GM12878 (cell line): ENCODE measurements at regions of chr15 and their contacts with region 1.

Region 1: GRCh38 chr15:48358229-48358641 is 27.0 kb downstream of the DUT start:
- DNase-seq: no peak
- ATAC-seq: peak; percentile 70
- H3K4me3 ChIP-seq: peak overlapping the region; percentile 22
- H3K27ac ChIP-seq: peak overlapping the region; percentile 53
- H3K4me1 ChIP-seq: peaks cover 10% of the 10 kb centered on the region
- H3K27me3 ChIP-seq: no peaks in the 10 kb centered on the region
- CTCF ChIP-seq: peak; percentile 44 to 73 (median 64); a peak in 5 of 6 replicates
- EP300 ChIP-seq: no peak
- POLR2A ChIP-seq: no peak
- RAD21 ChIP-seq: peak; percentile 78

Region 2: GRCh38 chr15:48406913-48407312 is 48.7 kb after region 1 on chr15:
- CTCF ChIA-PET with region 1: interaction called, 4 read pairs
- POLR2A ChIA-PET with region 1: no interaction called
- RAD21 ChIA-PET with region 1: interaction called, 19 read pairs
- SMC1A ChIA-PET with region 1: interaction called, 14 read pairs
- in situ Hi-C with region 1: no loop called
- intact Hi-C with region 1: no loop called
- DNase-seq: no peak
- ATAC-seq: no peak
- H3K4me3 ChIP-seq: no peak overlapping the region
- H3K27ac ChIP-seq: no peak overlapping the region
- H3K4me1 ChIP-seq: peaks cover 6% of the 10 kb centered on the region
- H3K27me3 ChIP-seq: no peaks in the 10 kb centered on the region
- CTCF ChIP-seq: peak in 2 of 3 experiments; percentile 2 to 38; a peak in 2 of 6 replicates
- EP300 ChIP-seq: no peak
- POLR2A ChIP-seq: no peak
- RAD21 ChIP-seq: no peak

Region 3: DNA sequence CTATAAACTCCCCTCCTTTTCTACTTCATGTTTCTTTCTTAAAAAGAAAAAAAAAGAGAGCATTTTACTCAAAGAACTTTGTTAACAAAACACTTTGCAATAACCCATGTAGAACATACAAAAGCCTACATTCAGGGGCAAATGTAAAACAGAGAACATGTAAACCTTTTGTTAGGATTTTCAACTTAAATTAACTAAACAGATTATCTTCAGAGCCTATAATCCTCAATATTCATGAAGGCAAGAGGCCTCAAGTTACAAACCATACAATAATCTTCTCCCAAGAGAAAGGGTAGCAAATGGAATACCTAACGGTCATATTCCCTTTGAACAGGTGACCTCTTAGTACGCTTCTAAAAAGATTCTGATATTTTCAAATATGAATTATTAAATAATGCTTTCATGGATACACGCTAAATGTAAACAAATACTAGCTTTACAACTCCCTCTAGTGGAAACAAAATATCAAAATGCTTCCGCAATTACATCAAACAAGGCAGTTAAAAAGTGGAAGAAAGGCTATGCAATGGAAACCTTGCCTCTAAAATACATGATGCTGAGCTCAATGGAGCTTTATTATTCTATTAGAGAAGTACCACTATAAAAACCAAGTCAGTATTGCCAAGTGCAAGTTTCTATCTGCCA is 442.7 kb after region 1 on chr15:
- CTCF ChIA-PET with region 1: interaction called, 69 read pairs
- POLR2A ChIA-PET with region 1: interaction called, 3 read pairs
- RAD21 ChIA-PET with region 1: interaction called, 50 read pairs
- SMC1A ChIA-PET with region 1: interaction called, 32 read pairs
- in situ Hi-C with region 1: no loop called
- intact Hi-C with region 1: loop called (anchors 5 kb)
- DNase-seq: no peak
- ATAC-seq: no peak
- H3K4me3 ChIP-seq: no peak overlapping the region
- H3K27ac ChIP-seq: no peak overlapping the region
- H3K4me1 ChIP-seq: peaks cover 12% of the 10 kb centered on the region
- H3K27me3 ChIP-seq: no peaks in the 10 kb centered on the region
- CTCF ChIP-seq: peak; percentile 21 to 43 (median 32); a peak in 4 of 6 replicates
- EP300 ChIP-seq: no peak
- POLR2A ChIP-seq: no peak
- RAD21 ChIP-seq: peak; percentile 66

Region 4: GRCh38 chr15:48861813-48862431 is 503.7 kb after region 1 on chr15:
- CTCF ChIA-PET with region 1: interaction called, 44 read pairs
- POLR2A ChIA-PET with region 1: no interaction called
- RAD21 ChIA-PET with region 1: interaction called, 11 read pairs
- SMC1A ChIA-PET with region 1: interaction called, 12 read pairs
- in situ Hi-C with region 1: no loop called
- intact Hi-C with region 1: loop called (anchors 1 kb)
- DNase-seq: no peak
- ATAC-seq: peak; percentile 87
- H3K4me3 ChIP-seq: no peak overlapping the region
- H3K27ac ChIP-seq: no peak overlapping the region
- H3K4me1 ChIP-seq: no peaks in the 10 kb centered on the region
- H3K27me3 ChIP-seq: no peaks in the 10 kb centered on the region; a peak in 1 of 4 replicates
- CTCF ChIP-seq: peak; percentile 67 to 92 (median 68); a peak in 5 of 6 replicates
- EP300 ChIP-seq: no peak
- POLR2A ChIP-seq: no peak
- RAD21 ChIP-seq: peak; percentile 99

Region 5: DNA sequence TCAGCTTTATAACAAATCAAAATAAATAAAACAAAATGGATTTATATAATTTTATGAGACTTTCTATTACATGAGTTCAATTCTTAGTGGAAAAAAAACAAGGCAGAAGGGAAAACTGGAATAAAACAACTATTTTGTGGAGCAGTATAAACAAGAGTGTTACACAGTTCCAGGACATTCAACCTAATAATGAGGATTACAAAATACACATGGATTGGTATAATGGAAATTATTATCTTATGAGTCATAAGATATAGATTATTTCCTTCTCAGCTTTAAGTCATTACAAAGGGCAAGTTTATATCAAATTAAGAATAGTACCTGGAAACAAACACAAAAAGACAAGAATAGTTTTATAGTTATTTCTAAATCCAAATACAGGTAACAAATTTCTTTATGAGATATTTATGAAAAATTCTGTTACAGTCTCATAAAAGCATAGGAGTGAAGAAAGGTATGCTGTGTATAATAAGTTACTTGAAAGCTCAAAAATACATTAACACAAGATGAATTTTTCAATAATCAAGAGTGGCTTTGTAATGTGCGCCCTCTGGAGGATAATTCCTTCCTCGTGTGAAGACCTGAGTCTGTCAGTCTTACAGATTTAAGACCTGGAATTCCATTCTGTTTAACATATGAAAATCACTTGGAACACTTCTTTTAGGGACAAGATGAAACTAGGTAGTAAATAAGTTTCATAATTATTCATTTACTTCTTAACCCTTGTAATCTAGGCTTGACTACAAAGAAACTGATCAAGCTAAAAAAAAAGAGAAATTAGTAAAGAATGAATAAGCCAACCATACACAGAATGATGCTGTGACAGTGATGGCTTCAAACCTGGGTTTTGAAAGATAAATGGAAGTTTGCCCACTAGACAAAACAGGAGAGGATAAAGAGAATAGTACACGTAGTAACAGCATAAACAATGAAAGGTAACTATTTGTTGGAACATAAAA is 787.7 kb after region 1 on chr15:
- CTCF ChIA-PET with region 1: interaction called, 11 read pairs
- POLR2A ChIA-PET with region 1: no interaction called
- RAD21 ChIA-PET with region 1: interaction called, 4 read pairs
- SMC1A ChIA-PET with region 1: interaction called, 12 read pairs
- in situ Hi-C with region 1: loop called (anchors 25 kb)
- intact Hi-C with region 1: loop called (anchors 10 kb)
- DNase-seq: no peak
- ATAC-seq: peak; percentile 75
- H3K4me3 ChIP-seq: no peak overlapping the region
- H3K27ac ChIP-seq: no peak overlapping the region
- H3K4me1 ChIP-seq: no peaks in the 10 kb centered on the region
- H3K27me3 ChIP-seq: no peaks in the 10 kb centered on the region
- CTCF ChIP-seq: peak; percentile 59 to 64 (median 63); a peak in 5 of 6 replicates
- EP300 ChIP-seq: no peak
- POLR2A ChIP-seq: no peak
- RAD21 ChIP-seq: peak; percentile 57